ENCODE measurements at regions of chr3 and their contacts with region 1.

Region 1: DNA sequence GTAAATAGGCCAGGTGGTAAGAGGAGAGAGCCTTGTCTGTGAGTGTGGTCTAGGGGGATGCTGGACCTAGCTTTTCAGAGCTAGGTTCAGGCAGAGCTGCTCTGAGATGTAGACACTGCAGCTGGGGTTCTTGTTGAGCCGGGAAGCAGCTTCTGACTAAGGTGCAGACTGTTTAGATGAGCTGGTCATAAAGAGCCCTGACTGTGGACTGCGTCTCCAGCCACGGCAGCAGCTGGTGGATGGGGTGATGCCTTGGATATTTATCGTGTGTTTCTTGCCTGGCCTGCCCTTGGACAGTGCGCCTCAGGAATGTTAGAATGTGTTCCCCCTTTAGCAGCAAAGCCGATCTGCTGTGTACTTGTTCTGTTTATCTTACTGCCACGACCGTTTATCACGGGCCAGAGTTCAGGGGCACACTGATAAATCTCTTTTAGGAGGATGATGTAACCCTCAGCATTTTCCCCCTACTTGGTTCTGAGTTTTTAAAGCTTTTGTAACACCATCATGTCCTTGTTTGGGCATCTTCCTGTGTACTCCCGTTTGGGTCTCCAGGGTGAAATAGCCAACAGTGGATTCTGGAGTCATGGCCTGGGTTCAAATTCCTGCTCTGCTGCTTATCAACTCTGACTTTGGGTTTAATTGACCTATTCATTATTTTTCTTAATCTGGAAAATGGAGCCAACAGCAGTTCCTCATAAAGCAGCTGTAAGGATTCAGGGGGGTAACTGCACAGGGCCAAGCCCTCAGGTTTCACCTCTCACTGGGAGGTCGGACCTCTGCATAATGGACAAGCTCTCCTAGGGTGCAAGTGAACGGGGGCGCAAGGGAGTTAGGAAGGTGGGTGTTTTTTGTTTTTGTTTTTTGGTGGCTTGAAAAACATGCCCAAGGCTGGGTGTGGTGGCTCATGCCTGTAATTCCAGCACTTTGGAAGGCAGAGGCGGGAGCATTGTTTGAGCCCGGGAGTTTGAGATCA is 51.4 kb downstream of the FLNB start:
- DNase-seq: no peak
- CTCF ChIP-seq: no peak

Region 2: DNA sequence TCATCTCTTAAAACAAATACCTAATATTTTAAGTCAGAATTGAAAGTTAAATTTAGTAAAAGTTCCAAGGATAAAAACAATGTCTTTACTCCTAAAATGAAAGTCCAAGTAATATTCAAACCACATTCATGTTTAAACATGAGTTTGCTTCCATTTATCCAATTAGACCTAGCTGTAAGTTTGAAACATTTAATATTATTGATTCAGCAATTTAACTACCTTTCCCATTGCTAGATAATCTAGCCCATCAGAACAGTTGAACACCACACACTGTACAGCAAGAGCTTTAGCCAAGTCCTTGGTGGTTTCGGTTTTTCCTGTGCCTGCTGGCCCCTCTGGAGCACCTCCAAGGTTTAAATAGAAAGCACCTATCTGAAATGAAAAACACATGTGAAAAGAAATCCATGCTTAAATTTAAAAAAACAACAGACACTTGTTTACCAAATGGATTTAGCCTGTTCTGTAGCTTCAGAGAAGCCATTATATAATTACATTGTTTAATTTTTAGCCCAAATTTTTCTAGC is 613.3 kb before region 1 on chr3:
- CTCF ChIA-PET with region 1: no interaction called
- POLR2A ChIA-PET with region 1: no interaction called
- DNase-seq: no peak
- CTCF ChIP-seq: no peak

Region 3: DNA sequence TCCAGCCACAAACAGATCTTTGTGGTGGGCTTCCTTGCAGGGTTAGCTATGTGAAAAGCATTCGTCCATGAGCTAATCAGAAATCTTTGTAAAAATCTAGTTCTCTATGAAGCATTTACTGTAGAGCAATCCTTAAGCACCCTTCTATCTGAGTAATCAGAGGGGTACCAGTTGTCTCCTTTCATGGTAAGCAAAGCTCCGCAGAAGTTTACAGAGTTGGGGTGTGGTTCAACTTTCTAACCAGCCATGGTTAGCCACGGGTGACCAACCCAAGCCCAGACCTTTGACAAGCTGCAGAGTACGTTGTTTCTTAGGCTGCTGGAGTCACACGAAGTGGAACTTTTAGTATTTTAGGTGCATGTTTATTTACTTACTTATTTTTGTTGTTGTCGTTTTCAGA is 26.0 kb after region 1 on chr3:
- CTCF ChIA-PET with region 1: no interaction called
- POLR2A ChIA-PET with region 1: interaction called, 10 read pairs
- DNase-seq: no peak
- CTCF ChIP-seq: no peak

Measured in GM10248 (cell line).